ENCODE measurements at regions of chr20 and their contacts with region 1.

Region 1: DNA sequence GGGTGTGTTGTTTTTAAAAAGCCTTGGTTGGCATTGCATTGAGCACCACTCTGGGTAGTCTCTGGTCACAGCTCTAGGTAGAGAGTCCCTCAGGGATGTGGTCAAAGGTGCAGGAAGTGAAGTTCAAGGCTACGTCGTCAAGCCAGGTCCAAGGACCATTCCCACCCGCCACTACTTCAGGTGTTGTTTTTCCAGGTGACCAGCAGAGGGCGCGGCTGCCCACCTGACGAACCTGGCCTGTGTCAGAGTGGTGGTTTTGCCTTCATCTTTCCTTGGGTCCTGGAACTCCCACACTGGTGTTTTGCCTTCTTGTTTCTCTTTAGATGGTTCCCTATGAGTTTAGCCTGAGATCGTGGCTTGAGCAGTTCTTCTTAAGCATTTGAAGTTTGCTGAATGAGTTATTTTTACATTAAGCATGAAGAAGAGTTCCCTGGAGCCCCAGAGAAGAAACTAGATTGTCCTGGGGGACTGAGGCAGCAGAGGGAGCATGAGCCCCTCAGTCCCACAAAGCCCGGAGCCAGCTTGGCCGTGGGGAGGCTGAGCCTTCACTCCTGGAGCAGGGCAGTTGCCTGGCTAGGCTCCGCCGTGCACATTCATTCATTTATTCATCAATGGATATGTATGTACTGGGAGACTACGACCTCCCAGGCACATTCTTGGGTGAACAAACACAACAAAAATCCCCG is 5.6 kb upstream of the PHACTR3 start:
- DNase-seq: no peak
- H3K4me3 ChIP-seq: no peak overlapping the region
- H3K27ac ChIP-seq: no peak overlapping the region
- H3K4me1 ChIP-seq: no peaks in the 10 kb centered on the region
- H3K27me3 ChIP-seq: peaks cover 5% of the 10 kb centered on the region
- CTCF ChIP-seq: peak; percentile 57

Region 2: DNA sequence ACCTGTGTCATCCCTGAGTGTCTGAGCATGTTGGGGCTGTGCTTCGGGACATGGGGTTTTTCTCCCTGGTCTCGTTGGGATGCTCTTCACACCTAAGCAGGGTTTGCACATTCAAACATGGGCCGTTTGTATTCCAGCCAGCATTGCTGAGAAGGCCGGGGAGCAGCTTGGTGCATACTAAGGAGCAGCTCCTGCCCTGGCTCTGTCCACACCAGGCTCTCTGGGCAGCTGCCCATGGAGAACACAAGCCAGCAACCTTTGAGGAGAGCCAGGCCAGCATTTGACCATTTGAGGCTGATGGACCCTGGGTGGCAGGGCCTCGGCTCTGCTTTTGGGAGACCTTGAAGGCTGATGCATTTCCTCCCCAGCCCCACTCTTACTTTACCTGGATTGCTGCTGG is 97.7 kb after region 1 on chr20:
- intact Hi-C with region 1: no loop called
- DNase-seq: no peak
- H3K4me3 ChIP-seq: no peak overlapping the region
- H3K27ac ChIP-seq: no peak overlapping the region
- H3K4me1 ChIP-seq: no peaks in the 10 kb centered on the region
- H3K27me3 ChIP-seq: no peaks in the 10 kb centered on the region
- CTCF ChIP-seq: no peak

Region 3: GRCh38 chr20:59751056-59751688 is 152.4 kb after region 1 on chr20:
- intact Hi-C with region 1: loop called (anchors 2 kb)
- DNase-seq: peak; percentile 64
- H3K4me3 ChIP-seq: no peak overlapping the region
- H3K27ac ChIP-seq: no peak overlapping the region
- H3K4me1 ChIP-seq: no peaks in the 10 kb centered on the region
- H3K27me3 ChIP-seq: no peaks in the 10 kb centered on the region
- CTCF ChIP-seq: peak; percentile 75

Measured in colonic mucosa (tissue), 4 donors.